ENCODE measurements at regions of chr1 and their contacts with region 1.

Region 1: GRCh38 chr1:23867953-23868556 is at the start of gene FUCA1:
- DNase-seq: peak; percentile 75 to 93
- H3K4me3 ChIP-seq: peak within 1 kb of the TSS; percentile 64
- H3K27ac ChIP-seq: no peak within 1 kb of the TSS
- H3K4me1 ChIP-seq: peaks cover 21% of the 10 kb centered on the region
- H3K27me3 ChIP-seq: no peaks in the 10 kb centered on the region
- CTCF ChIP-seq: peak; percentile 78
- total RNA-seq, gene FUCA1: 29.0 and 30.9 TPM in 2 replicates

Region 2: DNA sequence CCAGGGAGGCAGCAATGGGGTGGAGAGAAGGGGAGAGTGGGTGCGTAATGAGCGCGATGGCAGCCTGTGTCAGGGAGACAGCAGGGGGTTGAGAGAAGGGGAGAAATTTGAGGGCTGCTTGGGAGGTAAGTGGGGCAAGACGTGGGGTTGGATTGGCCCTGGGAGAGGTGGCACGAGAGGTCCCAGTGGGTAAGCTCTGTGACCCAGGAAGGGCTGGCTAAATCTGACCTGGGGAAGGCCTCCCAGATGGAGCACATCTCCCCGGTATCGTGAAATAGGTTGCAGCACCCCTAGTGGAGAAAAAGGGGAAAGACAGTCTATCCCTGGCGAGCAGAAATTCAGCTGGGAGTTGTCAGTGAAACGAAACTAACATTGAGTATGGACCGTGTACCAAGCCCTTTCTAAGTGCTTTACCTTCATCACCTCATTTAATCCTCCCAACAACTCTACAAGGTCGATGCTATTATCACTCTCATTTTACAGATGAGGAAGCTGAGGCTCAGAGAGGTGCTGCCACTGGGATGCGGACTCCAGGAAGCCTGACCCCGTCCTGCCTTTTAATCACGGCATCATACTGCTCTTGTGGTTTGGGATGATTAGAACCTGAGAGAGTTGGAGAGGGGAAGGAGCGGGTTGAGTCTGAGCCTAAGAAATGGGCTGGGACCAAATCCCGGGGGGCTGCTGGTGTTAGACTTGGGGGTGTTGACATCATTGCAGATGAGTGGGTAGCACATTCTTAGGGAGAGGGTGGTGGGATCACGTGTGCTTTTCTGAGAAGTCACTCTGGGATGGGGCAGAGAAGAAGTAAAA is 233.0 kb before region 1 on chr1:
- CTCF ChIA-PET with region 1: no interaction called
- POLR2A ChIA-PET with region 1: no interaction called
- intact Hi-C with region 1: no loop called
- DNase-seq: peak; percentile 59 to 62
- H3K4me3 ChIP-seq: peak overlapping the region; percentile 54; the same call in 1 of the 2 replicates
- H3K27ac ChIP-seq: peak overlapping the region; percentile 30; the same call in 1 of the 2 replicates
- H3K4me1 ChIP-seq: no peaks in the 10 kb centered on the region
- H3K27me3 ChIP-seq: no peaks in the 10 kb centered on the region
- CTCF ChIP-seq: peak; percentile 80

Region 3: GRCh38 chr1:23772049-23772853 is 95.8 kb before region 1 on chr1:
- CTCF ChIA-PET with region 1: no interaction called
- POLR2A ChIA-PET with region 1: interaction called, 7 read pairs
- intact Hi-C with region 1: loop called (anchors 2 kb)
- DNase-seq: peak; percentile 60 to 81
- H3K4me3 ChIP-seq: no peak overlapping the region
- H3K27ac ChIP-seq: no peak overlapping the region
- H3K4me1 ChIP-seq: peaks cover 11% of the 10 kb centered on the region; the same call in 1 of the 2 replicates
- H3K27me3 ChIP-seq: no peaks in the 10 kb centered on the region
- CTCF ChIP-seq: peak; percentile 82

Region 4: GRCh38 chr1:23800400-23801337 is 67.4 kb before region 1 on chr1 and contains the start of gene GALE:
- CTCF ChIA-PET with region 1: no interaction called
- POLR2A ChIA-PET with region 1: interaction called, 3 read pairs
- intact Hi-C with region 1: loop called (anchors 2 kb)
- DNase-seq: peak; percentile 76 to 93
- H3K4me3 ChIP-seq: peak within 1 kb of the TSS; percentile 72
- H3K27ac ChIP-seq: peak within 1 kb of the TSS; percentile 85
- H3K4me1 ChIP-seq: peaks cover 14% of the 10 kb centered on the region
- H3K27me3 ChIP-seq: no peaks in the 10 kb centered on the region
- CTCF ChIP-seq: no peak
- total RNA-seq, gene GALE: 40.5 and 45.8 TPM in 2 replicates

Region 5: DNA sequence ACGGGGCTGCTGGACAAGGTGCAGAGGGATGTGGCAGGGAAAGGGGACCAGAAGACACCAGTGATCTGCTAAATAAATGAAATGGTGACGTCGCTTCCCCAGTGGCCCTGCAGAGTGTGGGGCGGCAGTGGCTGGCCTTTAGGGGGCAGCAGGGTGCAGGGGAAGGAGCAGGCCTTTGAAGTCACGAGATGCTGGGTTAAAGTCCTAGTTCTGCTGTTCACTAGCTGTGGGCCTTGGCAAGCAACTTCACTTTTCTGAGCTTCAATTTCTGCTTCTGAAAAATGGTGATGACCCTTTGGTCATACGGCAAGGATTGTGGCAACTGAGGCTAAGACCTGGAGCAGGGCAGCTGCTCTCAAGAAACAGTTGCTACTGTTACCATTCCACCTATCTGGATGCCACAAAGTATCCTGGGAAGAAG is 58.3 kb before region 1 on chr1:
- CTCF ChIA-PET with region 1: interaction called, 6 read pairs
- POLR2A ChIA-PET with region 1: no interaction called
- intact Hi-C with region 1: loop called (anchors 1 kb)
- DNase-seq: peak in 1 of 2 experiments; percentile 66
- H3K4me3 ChIP-seq: no peak overlapping the region
- H3K27ac ChIP-seq: no peak overlapping the region
- H3K4me1 ChIP-seq: no peaks in the 10 kb centered on the region
- H3K27me3 ChIP-seq: no peaks in the 10 kb centered on the region
- CTCF ChIP-seq: peak; percentile 68

Region 6: DNA sequence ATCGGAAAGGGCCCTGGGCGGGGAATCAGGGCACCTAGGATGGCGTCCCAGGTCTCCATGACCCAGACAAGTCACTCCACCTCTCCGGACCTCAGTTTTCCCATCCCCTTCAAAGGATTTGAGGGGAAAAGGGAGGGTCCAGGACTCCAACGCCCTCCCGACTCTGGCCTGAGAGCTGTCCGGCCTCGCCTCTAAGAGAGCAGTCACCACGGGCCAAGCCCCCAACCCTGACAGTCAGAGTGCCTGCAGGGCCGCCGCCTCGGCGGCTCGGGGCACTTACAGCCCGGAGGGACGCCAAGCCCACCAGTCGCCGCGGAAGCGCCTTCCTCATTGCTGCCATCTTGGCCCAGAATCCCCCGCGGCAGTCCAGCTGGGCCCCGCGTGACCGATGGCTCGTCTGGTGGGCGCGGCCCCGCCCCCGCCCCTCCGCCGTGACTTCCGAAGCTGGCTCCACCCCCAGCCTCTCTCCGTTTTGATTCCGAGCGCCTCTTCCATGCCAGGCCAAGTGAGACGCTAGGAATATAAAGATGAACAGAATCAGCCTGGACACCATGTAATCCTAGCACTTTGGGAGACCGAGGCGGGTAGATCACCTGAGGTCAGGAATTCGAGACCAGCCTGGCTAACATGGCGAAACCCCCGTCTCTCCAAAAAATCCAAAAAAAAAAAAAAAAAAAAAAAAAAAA is 42.8 kb before region 1 on chr1 and contains the start of gene HMGCL:
- CTCF ChIA-PET with region 1: no interaction called
- POLR2A ChIA-PET with region 1: interaction called, 7 read pairs
- intact Hi-C with region 1: loop called (anchors 1 kb)
- DNase-seq: peak; percentile 69 to 79
- H3K4me3 ChIP-seq: peak within 1 kb of the TSS; percentile 82
- H3K27ac ChIP-seq: no peak within 1 kb of the TSS
- H3K4me1 ChIP-seq: peaks cover 10% of the 10 kb centered on the region
- H3K27me3 ChIP-seq: no peaks in the 10 kb centered on the region
- CTCF ChIP-seq: no peak
- total RNA-seq, gene HMGCL: 43.2 and 53.4 TPM in 2 replicates

Region 7: GRCh38 chr1:23916209-23917131 is 48.4 kb after region 1 on chr1:
- CTCF ChIA-PET with region 1: no interaction called
- POLR2A ChIA-PET with region 1: no interaction called
- intact Hi-C with region 1: loop called (anchors 2 kb)
- DNase-seq: peak; percentile 60 to 74
- H3K4me3 ChIP-seq: no peak overlapping the region
- H3K27ac ChIP-seq: no peak overlapping the region
- H3K4me1 ChIP-seq: peaks cover 8% of the 10 kb centered on the region; the same call in 1 of the 2 replicates
- H3K27me3 ChIP-seq: no peaks in the 10 kb centered on the region
- CTCF ChIP-seq: peak; percentile 68